Activated naive CD4-positive, alpha-beta T cell treated with anti-CD3 and anti-CD28 coated beads for 36 hours (primary cell): ENCODE measurements at regions of chr3 and their contacts with region 1.

Region 1: DNA sequence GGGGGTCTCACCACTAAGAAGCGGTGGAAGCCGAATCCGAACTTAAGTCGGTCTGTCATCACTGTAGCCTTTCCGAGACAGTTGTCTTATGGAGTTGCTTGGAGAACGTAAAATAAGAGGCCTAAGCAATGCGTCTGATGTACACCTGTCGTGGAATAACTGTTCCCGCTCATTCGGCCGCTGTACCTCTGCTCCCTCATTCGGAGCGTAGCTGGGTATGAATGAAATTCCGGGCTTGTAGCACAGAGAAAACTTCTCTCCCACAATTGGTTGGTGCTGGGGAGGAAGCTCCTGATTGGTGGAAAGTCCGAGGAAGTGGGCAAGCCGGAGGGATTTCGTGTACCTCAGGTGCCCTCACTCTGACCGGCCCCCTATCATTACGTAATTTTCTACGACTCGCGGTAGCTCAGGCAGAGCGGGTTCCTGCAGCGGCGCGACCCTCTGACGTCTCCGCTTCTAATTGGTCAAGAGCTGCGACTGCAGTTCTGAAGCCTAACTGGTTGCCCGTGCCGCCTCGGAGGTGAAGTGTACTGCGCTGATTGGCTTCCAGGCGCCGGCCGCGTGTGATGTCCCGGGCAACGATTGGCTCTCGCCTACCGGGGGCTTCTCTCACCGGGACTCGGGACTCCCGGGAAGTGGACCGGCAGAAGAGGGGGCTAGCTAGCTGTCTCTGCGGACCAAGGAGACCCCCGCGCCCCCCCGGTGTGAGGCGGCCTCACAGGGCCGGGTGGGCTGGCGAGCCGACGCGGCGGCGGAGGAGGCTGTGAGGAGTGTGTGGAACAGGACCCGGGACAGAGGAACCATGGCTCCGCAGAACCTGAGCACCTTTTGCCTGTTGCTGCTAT is at the start of gene DNAJB11:
- DNase-seq: peak; percentile 100
- H3K4me3 Mint-ChIP-seq: peak within 1 kb of the TSS; percentile 95
- H3K27ac Mint-ChIP-seq: peak within 1 kb of the TSS; percentile 85
- H3K4me1 Mint-ChIP-seq: peaks cover 53% of the 10 kb centered on the region
- H3K27me3 Mint-ChIP-seq: no peaks in the 10 kb centered on the region
- total RNA-seq, gene DNAJB11: 30.0 to 30.5 TPM

Region 2: GRCh38 chr3:185585859-185586685 is 984.2 kb before region 1 on chr3 and contains the start of gene SENP2:
- CTCF ChIA-PET with region 1: no interaction called
- intact Hi-C with region 1: loop called (anchors 10 kb)
- DNase-seq: peak; percentile 100
- H3K4me3 Mint-ChIP-seq: peak within 1 kb of the TSS; percentile 83
- H3K27ac Mint-ChIP-seq: peak within 1 kb of the TSS; percentile 88
- H3K4me1 Mint-ChIP-seq: peaks cover 27% of the 10 kb centered on the region
- H3K27me3 Mint-ChIP-seq: no peaks in the 10 kb centered on the region
- total RNA-seq, gene SENP2: 19.4 to 25.0 TPM

Region 3: GRCh38 chr3:186259612-186260383 is 310.5 kb before region 1 on chr3:
- CTCF ChIA-PET with region 1: interaction called, 3 read pairs
- intact Hi-C with region 1: loop called (anchors 1 kb)
- DNase-seq: peak; percentile 78
- H3K4me3 Mint-ChIP-seq: peak overlapping the region; percentile 51
- H3K27ac Mint-ChIP-seq: peak overlapping the region; percentile 37
- H3K4me1 Mint-ChIP-seq: peaks cover 30% of the 10 kb centered on the region
- H3K27me3 Mint-ChIP-seq: peaks cover 2% of the 10 kb centered on the region

Region 4: DNA sequence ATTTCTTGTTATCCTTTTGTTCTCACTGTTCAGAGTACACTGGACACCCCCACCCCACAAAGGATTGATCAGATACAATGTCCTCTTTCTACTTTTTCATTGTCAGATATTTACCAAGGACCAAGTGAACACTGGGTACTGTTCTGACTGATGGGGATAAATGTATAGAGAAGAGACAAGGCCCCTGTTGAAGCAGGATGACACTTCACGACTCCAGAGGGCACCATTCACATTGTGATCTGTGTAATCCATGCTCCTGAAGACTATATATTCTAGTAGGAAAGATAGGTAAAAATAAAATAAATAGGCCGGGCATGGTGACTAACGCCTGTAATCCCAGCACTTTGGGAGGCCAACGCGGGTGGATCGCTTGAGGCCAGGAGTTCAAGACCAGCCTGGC is 18.9 kb before region 1 on chr3:
- CTCF ChIA-PET with region 1: no interaction called
- intact Hi-C with region 1: no loop called
- DNase-seq: no peak
- H3K4me3 Mint-ChIP-seq: no peak overlapping the region
- H3K27ac Mint-ChIP-seq: no peak overlapping the region
- H3K4me1 Mint-ChIP-seq: no peaks in the 10 kb centered on the region
- H3K27me3 Mint-ChIP-seq: no peaks in the 10 kb centered on the region

Region 5: DNA sequence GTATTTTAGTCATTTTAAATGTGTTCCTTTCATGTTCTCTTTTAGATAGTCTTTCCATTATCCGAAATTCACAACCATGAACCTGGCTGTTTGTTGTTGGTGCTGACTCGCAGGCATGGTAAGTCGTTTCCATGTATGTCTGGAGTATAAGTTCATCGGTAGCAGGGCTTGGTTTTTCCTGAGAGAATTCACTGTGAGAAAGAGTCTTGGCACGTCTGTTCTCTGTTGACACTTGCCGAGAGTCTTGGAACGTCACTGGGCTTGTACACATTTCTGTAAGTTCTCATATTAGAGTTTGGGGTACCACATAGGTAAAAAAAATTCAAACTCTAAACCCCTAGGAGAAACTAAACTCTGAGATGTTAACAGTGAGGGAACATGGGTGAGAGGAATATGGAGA is 183.7 kb after region 1 on chr3:
- CTCF ChIA-PET with region 1: no interaction called
- intact Hi-C with region 1: loop called (anchors 1 kb)
- DNase-seq: no peak
- H3K4me3 Mint-ChIP-seq: no peak overlapping the region
- H3K27ac Mint-ChIP-seq: no peak overlapping the region
- H3K4me1 Mint-ChIP-seq: peaks cover 12% of the 10 kb centered on the region
- H3K27me3 Mint-ChIP-seq: no peaks in the 10 kb centered on the region

Region 6: GRCh38 chr3:186806089-186807055 is 236.1 kb after region 1 on chr3 and contains the start of gene RFC4:
- CTCF ChIA-PET with region 1: no interaction called
- intact Hi-C with region 1: loop called (anchors 1 kb)
- DNase-seq: peak; percentile 92
- H3K4me3 Mint-ChIP-seq: peak within 1 kb of the TSS; percentile 91
- H3K27ac Mint-ChIP-seq: peak within 1 kb of the TSS; percentile 94
- H3K4me1 Mint-ChIP-seq: peaks cover 19% of the 10 kb centered on the region
- H3K27me3 Mint-ChIP-seq: no peaks in the 10 kb centered on the region
- total RNA-seq, gene RFC4: 135 to 136 TPM

Region 7: DNA sequence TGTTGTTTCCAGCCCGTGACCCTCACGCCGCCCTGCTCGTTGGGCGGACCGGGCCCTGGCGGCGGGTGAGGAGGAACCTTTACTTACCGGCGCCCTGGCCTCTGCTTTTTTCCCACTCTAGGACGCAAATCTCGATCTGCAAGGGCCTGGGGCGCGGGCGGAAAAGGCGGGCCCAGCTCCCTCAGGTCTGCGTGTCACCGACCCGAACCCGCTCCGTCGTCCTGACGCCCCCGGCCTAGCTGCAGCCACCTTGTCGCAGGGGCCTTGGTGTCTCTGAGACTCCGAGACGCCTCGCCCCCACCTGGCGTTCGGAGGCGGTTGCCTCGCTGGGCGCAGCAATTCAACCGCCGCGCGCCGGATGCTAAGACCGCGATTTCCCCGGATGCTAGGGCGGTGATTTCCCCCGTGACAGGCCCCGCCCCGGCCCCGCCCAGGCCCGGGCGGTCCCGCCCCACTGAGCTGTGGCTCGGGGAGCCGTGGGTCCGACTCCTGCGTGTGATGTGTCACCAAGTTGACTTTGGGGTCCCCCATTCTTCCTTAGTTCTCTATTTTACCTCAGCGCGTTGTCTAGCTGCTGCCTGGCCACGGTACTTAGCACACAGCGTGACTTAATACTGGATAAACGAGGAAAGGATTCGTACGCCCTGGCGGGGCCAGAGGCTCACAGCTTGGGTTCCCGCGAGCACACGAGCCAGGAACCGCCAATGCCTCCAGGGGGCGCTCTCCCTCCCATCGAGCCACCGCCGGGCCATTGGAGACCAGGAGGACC is 569.0 kb after region 1 on chr3 and contains the start of gene RPL39L:
- CTCF ChIA-PET with region 1: no interaction called
- intact Hi-C with region 1: loop called (anchors 5 kb)
- DNase-seq: peak; percentile 95
- H3K4me3 Mint-ChIP-seq: peak within 1 kb of the TSS; percentile 91
- H3K27ac Mint-ChIP-seq: peak within 1 kb of the TSS; percentile 95
- H3K4me1 Mint-ChIP-seq: peaks cover 21% of the 10 kb centered on the region
- H3K27me3 Mint-ChIP-seq: no peaks in the 10 kb centered on the region
- total RNA-seq, gene RPL39L: 19.2 to 20.9 TPM

Region 8: GRCh38 chr3:187406927-187407326 is 836.6 kb after region 1 on chr3:
- CTCF ChIA-PET with region 1: no interaction called
- intact Hi-C with region 1: no loop called
- DNase-seq: no peak
- H3K4me3 Mint-ChIP-seq: no peak overlapping the region
- H3K27ac Mint-ChIP-seq: no peak overlapping the region
- H3K4me1 Mint-ChIP-seq: no peaks in the 10 kb centered on the region
- H3K27me3 Mint-ChIP-seq: peaks cover 23% of the 10 kb centered on the region